IMR-90 (cell line): ENCODE measurements at regions of chr4 and their contacts with region 1.

Region 1: GRCh38 chr4:15253201-15253748 is 174.6 kb upstream of the C1QTNF7 start:
- DNase-seq: no peak
- ATAC-seq: no peak
- H3K4me3 ChIP-seq: no peak overlapping the region
- H3K27ac ChIP-seq: no peak overlapping the region
- H3K4me1 ChIP-seq: no peaks in the 10 kb centered on the region
- H3K27me3 ChIP-seq: peaks cover 4% of the 10 kb centered on the region; the same call in 1 of the 2 replicates
- CTCF ChIP-seq: no peak
- POLR2A ChIP-seq: no peak
- RAD21 ChIP-seq: no peak

Region 2: DNA sequence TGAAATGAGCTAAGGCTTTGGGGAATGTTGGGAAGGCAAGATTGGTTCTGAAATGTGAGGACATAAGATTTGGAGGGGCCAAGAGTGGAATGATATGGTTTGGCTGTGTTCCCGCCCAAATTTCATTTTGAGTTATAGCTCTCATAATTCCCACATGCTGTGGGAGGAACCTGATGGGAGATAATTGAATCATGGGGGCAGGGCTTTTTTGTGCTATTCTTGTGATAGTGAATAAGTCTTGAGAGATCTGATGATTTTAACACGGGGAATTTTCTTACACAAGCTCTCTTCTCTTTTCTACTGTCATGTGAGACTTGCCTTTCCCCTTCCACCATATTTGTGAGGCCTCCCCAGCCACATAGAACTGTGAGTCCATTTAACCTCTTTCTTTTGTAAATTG is 16.9 kb after region 1 on chr4:
- CTCF ChIA-PET with region 1: no interaction called
- POLR2A ChIA-PET with region 1: no interaction called
- dilution Hi-C with region 1: no loop called
- in situ Hi-C with region 1: no loop called
- intact Hi-C with region 1: loop called (anchors 2 kb)
- DNase-seq: no peak
- ATAC-seq: no peak
- H3K4me3 ChIP-seq: no peak overlapping the region
- H3K27ac ChIP-seq: no peak overlapping the region
- H3K4me1 ChIP-seq: no peaks in the 10 kb centered on the region
- H3K27me3 ChIP-seq: no peaks in the 10 kb centered on the region
- CTCF ChIP-seq: no peak
- POLR2A ChIP-seq: no peak
- RAD21 ChIP-seq: no peak

Region 3: GRCh38 chr4:15756361-15756861 is 503.1 kb after region 1 on chr4:
- CTCF ChIA-PET with region 1: no interaction called
- POLR2A ChIA-PET with region 1: no interaction called
- dilution Hi-C with region 1: no loop called
- in situ Hi-C with region 1: no loop called
- intact Hi-C with region 1: no loop called
- DNase-seq: peak; percentile 26
- ATAC-seq: no peak
- H3K4me3 ChIP-seq: no peak overlapping the region
- H3K27ac ChIP-seq: no peak overlapping the region
- H3K4me1 ChIP-seq: no peaks in the 10 kb centered on the region; the same call in 1 of the 2 replicates
- H3K27me3 ChIP-seq: no peaks in the 10 kb centered on the region; the same call in 1 of the 2 replicates
- CTCF ChIP-seq: peak; percentile 29; the same call in 1 of the 2 replicates
- POLR2A ChIP-seq: no peak
- RAD21 ChIP-seq: 0 out of 2 replicates have a peak, but pooled peaks have one; percentile 7